ENCODE measurements at regions of chr1 and their contacts with region 1.

Region 1: GRCh38 chr1:224434691-224435317 is at the start of gene WDR26:
- DNase-seq: peak; percentile 87
- H3K4me3 ChIP-seq: peak within 1 kb of the TSS; percentile 77 to 94 (median 88)
- H3K27ac ChIP-seq: peak within 1 kb of the TSS; percentile 92 to 98 (median 97)
- H3K4me1 ChIP-seq: peaks cover 22 to 49% (median 43%) of the 10 kb centered on the region in 4 donors
- H3K27me3 ChIP-seq: no peaks in the 10 kb centered on the region
- CTCF ChIP-seq: peak in 3 of 5 experiments; percentile 20 to 55 (median 40)
- EP300 ChIP-seq: no peak
- POLR2A ChIP-seq: peak; percentile 75
- total RNA-seq, gene WDR26: 77.4 to 127 (median 109) TPM

Region 2: GRCh38 chr1:224356685-224357625 is 77.8 kb before region 1 on chr1 and contains the start of gene CNIH4:
- in situ Hi-C with region 1: no loop called
- intact Hi-C with region 1: loop called (anchors 5 kb)
- DNase-seq: peak; percentile 92
- H3K4me3 ChIP-seq: peak within 1 kb of the TSS; percentile 51 to 97 (median 88)
- H3K27ac ChIP-seq: peak within 1 kb of the TSS; percentile 86 to 97 (median 94)
- H3K4me1 ChIP-seq: peaks cover 7 to 58% (median 28%) of the 10 kb centered on the region in 4 donors
- H3K27me3 ChIP-seq: no peaks in the 10 kb centered on the region
- CTCF ChIP-seq: no peak
- EP300 ChIP-seq: no peak
- POLR2A ChIP-seq: peak; percentile 89
- total RNA-seq, gene CNIH4: 33.0 to 48.7 (median 42.0) TPM